Ascending aorta (tissue), 2 donors: ENCODE measurements at regions of chr9 and their contacts with region 1.

Region 1: GRCh38 chr9:6272229-6272598 is 56.0 kb upstream of the TPD52L3 start:
- DNase-seq: peak in 1 of 2 donors; percentile 70
- H3K4me3 ChIP-seq: no peak overlapping the region
- H3K27ac ChIP-seq: peak overlapping the region; percentile 70 to 78
- H3K4me1 ChIP-seq: peaks cover 0 to 13% of the 10 kb centered on the region in 2 donors
- H3K27me3 ChIP-seq: no peaks in the 10 kb centered on the region
- CTCF ChIP-seq: no peak

Region 2: DNA sequence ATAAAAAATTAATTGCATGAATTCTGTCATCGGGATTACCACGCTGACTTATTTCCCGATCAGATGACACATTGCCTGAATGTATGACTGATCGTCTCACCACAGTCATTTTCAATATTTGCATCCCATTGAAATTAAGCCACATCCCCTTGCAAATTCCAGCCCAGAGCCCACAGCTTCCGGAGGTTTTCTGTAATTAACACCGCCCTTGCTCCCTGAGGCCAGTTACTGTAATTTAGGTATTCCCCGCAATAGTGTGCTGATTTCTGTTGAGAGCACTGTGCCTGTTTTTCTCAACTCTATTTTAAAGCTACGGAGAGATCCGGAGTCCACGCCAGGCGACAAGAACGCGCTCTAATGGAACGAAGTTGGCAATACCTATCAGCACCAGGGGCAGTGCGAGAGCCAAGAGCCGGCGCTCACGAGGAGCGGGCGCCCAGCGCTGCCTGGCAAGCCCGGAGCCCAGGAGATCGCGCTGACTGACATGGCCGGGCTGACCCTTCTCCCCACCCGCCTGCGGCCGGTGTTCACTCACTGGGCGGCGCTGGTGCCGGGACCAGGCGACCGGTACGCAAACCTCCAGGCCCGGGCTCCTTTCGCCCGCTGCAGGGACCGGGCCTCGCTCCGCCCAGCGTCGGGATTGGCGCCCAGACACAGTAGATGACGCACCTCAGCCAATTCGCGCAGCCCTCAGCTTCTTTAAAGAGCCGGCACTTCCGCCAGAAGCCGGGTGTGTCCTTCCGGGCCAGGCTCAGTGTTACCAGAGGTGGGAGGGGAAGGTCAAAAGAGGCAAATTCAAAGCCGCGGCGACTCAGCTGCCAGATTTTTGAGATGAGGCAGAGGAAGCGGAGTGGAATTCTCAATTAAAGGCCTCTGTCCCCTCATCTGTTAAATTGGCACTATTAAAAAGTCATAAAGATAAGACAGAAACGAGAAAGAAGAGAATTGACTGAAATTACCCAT is 834.7 kb before region 1 on chr9 and contains the start of gene PLGRKT:
- intact Hi-C with region 1: no loop called
- DNase-seq: peak; percentile 85 to 98
- H3K4me3 ChIP-seq: peak within 1 kb of the TSS; percentile 75 to 77
- H3K27ac ChIP-seq: peak within 1 kb of the TSS; percentile 91 to 93
- H3K4me1 ChIP-seq: peaks cover 0 to 9% of the 10 kb centered on the region in 2 donors
- H3K27me3 ChIP-seq: no peaks in the 10 kb centered on the region
- CTCF ChIP-seq: peak in 2 of 3 experiments; percentile 25 to 39
- total RNA-seq, gene PLGRKT: not detected

Region 3: DNA sequence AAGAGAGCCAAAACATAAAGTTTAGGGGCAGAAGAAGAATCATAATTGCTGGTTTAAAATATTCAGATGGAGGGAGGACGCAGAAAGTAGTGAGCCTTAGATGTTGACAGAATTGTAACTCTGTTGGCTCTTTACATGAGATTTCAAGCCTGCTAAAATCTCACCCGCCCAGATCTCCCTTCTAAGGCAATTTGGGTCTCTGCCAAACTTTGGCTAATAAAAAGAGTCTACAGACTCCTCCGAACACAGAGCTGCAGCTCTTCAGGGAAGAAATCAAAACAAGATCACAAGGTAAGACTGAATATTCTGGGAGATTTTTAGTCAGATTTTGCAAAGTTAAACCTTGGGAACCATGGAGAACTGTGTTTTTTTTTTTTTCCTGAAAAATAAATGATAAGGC is 56.7 kb before region 1 on chr9 and contains the start of gene IL33:
- intact Hi-C with region 1: loop called (anchors 2 kb)
- DNase-seq: no peak
- H3K4me3 ChIP-seq: peak within 1 kb of the TSS; percentile 44 to 53
- H3K27ac ChIP-seq: peak within 1 kb of the TSS; percentile 41 to 77
- H3K4me1 ChIP-seq: peaks cover 0 to 19% of the 10 kb centered on the region in 2 donors
- H3K27me3 ChIP-seq: no peaks in the 10 kb centered on the region
- CTCF ChIP-seq: no peak
- total RNA-seq, gene IL33: 38.0 TPM